PC-9 (cell line): ENCODE measurements at regions of chr12 and their contacts with region 1.

Region 1: DNA sequence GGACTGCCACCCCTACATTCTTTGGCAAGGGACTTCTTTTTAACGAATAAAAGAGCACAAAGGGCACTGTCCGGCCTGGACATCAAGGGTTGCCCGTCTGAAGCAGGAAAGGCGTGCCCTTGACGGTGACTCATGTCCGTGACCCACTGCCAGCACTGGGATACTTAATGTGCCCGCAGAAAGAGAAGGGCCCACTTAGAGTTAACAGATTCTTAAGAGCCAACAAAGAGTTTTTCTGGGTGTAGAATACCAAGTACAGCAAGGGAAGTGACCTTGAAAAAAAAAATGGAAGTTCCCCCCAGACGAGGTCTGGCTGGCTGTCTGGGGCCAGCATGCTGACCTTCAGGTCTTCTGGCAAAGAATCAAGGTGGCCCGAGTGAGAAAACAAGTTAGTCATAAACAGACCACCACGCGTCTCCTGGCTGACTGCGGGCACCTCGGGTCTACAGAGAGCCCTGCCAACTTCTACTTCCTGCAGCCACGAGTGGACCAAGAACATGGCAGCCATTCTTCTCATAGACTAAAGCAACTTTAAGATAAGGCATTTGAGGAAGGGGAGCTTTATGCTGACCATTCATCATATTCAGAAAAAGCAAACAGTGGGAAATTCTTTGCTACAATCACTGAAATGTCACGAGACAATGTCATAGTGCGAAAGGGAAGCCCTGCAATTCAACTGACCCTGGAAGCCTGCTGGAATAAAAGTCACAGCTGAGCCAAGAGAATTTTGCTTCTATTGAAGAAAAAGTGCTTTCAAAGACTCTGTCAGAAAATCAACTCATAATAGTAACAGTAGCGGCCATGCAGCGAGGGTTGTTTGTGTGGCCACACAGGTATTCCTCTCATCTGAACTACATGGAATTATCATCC is 10.5 kb upstream of the SELPLG start:
- DNase-seq: peak in 1 of 2 experiments; percentile 61
- H3K4me3 ChIP-seq: no peak overlapping the region
- H3K27ac ChIP-seq: no peak overlapping the region
- H3K4me1 ChIP-seq: no peaks in the 10 kb centered on the region
- H3K27me3 ChIP-seq: no peaks in the 10 kb centered on the region
- CTCF ChIP-seq: no peak

Region 2: DNA sequence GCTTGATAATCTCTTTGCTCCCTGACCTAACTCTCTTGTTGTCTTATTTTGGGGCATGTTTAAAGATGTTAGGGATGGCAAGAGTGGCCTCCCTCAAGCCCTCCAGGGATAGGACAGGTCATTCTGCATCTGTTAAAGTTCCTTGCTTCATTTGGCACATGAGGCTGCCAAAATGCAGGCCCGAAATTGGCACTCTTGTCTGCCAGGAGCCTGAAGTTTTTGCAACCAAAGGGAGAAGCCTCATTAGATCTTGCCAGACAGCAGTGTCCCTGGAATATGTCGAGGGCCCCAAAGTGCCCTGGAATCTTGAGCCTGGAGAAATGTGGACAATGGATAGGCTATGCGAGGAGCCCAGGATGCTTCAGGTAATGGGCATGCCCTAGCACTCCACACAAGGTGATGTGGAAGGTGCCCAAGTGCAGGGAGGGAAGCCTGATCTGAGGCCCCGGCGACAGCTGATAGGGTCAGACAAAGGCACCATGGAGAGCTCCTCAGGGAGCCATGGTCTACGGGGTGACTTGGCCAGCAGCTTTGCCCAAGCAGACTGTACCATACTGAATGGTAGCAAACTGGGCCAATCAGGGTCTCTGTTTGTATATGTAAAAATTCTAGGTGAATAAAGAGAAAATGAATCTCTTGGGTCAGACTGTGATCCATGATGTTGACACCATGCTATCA is 688.1 kb before region 1 on chr12:
- CTCF ChIA-PET with region 1: no interaction called
- POLR2A ChIA-PET with region 1: no interaction called
- intact Hi-C with region 1: no loop called
- DNase-seq: no peak
- H3K4me3 ChIP-seq: no peak overlapping the region
- H3K27ac ChIP-seq: no peak overlapping the region
- H3K4me1 ChIP-seq: no peaks in the 10 kb centered on the region
- H3K27me3 ChIP-seq: peaks cover 49% of the 10 kb centered on the region; the same call in 1 of the 2 replicates
- CTCF ChIP-seq: no peak

Region 3: DNA sequence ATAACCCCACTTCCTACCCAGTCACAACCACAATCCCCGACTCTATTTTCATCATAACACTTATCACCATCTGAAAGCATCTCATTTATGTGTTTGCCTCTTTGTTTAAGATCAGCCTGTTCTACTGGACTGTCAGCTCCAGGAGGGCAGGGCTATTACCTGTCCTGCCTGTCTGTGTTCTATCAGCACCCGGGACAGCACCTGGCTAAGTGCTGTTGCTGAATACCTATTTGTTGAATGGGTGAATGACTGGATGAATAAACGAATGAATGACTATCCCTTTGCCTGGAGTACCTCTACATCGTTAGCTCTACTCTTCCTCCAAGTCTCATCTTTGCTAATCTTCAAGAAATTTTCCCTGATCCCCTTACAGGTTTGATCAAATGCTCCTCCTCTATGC is 446.1 kb before region 1 on chr12:
- CTCF ChIA-PET with region 1: no interaction called
- POLR2A ChIA-PET with region 1: no interaction called
- intact Hi-C with region 1: no loop called
- DNase-seq: no peak
- H3K4me3 ChIP-seq: no peak overlapping the region
- H3K27ac ChIP-seq: no peak overlapping the region
- H3K4me1 ChIP-seq: no peaks in the 10 kb centered on the region
- H3K27me3 ChIP-seq: peaks cover 5% of the 10 kb centered on the region; the same call in 1 of the 2 replicates
- CTCF ChIP-seq: no peak

Region 4: GRCh38 chr12:108623577-108623976 is 20.6 kb before region 1 on chr12:
- CTCF ChIA-PET with region 1: interaction called, 10 read pairs
- POLR2A ChIA-PET with region 1: no interaction called
- intact Hi-C with region 1: loop called (anchors 2 kb)
- DNase-seq: no peak
- H3K4me3 ChIP-seq: no peak overlapping the region
- H3K27ac ChIP-seq: no peak overlapping the region
- H3K4me1 ChIP-seq: peaks cover 26% of the 10 kb centered on the region
- H3K27me3 ChIP-seq: no peaks in the 10 kb centered on the region
- CTCF ChIP-seq: no peak

Region 5: DNA sequence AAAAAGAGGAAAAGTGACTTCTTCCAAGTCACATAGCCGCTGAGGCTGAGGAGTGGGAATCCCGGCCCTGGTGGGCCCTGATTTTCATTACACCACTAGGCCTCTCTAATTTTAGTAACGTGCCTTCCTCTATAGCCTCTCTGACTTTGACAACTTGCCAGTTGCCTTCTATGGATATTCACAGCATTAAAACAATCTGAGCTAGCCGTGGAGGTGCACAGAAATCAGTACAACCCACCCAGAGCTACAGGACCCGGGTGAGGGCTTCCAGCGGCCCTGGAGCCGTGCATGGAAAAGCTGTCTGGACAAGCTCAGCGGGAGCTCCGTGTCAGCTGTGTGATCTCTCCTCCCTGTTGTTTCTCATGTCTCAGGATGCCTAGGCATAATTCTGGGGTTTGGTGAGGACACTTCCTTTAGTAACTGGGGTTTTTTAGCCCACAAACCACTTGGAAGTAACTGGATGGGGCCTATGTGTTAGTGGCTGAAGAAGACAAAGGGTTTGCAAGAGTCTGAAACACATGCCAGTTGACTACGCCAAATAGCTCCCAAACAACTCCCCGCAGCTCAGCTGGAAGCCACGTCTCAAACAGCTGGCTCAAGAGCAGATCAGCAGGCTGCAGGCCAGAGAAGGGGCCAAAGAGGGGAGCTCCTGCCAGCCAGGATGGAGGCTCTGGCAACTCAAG is 160.2 kb after region 1 on chr12:
- CTCF ChIA-PET with region 1: no interaction called
- POLR2A ChIA-PET with region 1: no interaction called
- intact Hi-C with region 1: no loop called
- DNase-seq: no peak
- H3K4me3 ChIP-seq: no peak overlapping the region
- H3K27ac ChIP-seq: no peak overlapping the region
- H3K4me1 ChIP-seq: no peaks in the 10 kb centered on the region
- H3K27me3 ChIP-seq: no peaks in the 10 kb centered on the region
- CTCF ChIP-seq: no peak